Body of pancreas (tissue), 4 donors: ENCODE measurements at regions of chr14 and their contacts with region 1.

Region 1: GRCh38 chr14:77151918-77152588 is 10.5 kb upstream of the ZDHHC22 start:
- DNase-seq: no peak
- ATAC-seq: no peak
- H3K4me3 ChIP-seq: no peak overlapping the region
- H3K27ac ChIP-seq: no peak overlapping the region
- H3K4me1 ChIP-seq: no peaks in the 10 kb centered on the region
- H3K27me3 ChIP-seq: peaks cover 0 to 1% of the 10 kb centered on the region in 2 donors
- CTCF ChIP-seq: peak in 5 of 7 experiments; percentile 14 to 41 (median 24)
- POLR2A ChIP-seq: no peak

Region 2: DNA sequence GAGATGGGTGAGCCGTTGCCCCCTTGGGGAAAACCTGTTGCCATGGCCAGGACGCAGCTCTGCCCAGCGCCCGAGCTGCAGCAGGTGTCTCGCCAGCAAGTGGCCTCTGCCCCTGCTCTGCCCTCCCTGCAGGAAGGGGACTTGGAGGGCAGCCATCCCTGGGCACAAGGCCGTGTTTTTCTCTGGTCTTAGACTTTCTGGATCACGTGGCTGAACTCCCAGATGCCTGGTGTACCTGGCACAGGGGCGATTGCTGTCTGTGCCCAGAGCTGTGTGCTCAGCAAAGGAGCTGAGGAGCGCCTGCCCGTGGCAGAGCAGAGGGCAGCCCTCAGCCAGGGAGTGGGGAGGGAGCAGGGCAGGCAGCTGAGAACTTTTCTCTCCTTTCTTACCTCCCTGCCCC is 67.5 kb after region 1 on chr14:
- intact Hi-C with region 1: loop called (anchors 5 kb)
- DNase-seq: peak; percentile 72 to 93 (median 86)
- ATAC-seq: peak; percentile 87
- H3K4me3 ChIP-seq: no peak overlapping the region
- H3K27ac ChIP-seq: no peak overlapping the region
- H3K4me1 ChIP-seq: peaks cover 11% of the 10 kb centered on the region
- H3K27me3 ChIP-seq: no peaks in the 10 kb centered on the region
- CTCF ChIP-seq: peak in 1 of 7 experiments; percentile 31
- POLR2A ChIP-seq: no peak

Region 3: GRCh38 chr14:77314043-77314442 is 162.0 kb after region 1 on chr14:
- intact Hi-C with region 1: loop called (anchors 5 kb)
- DNase-seq: no peak
- ATAC-seq: no peak
- H3K4me3 ChIP-seq: no peak overlapping the region
- H3K27ac ChIP-seq: no peak overlapping the region
- H3K4me1 ChIP-seq: peaks cover 33% of the 10 kb centered on the region
- H3K27me3 ChIP-seq: no peaks in the 10 kb centered on the region
- CTCF ChIP-seq: no peak
- POLR2A ChIP-seq: no peak

Region 4: GRCh38 chr14:77799863-77800730 is 648.0 kb after region 1 on chr14 and contains the start of gene ADCK1:
- intact Hi-C with region 1: no loop called
- DNase-seq: peak; percentile 90 to 94 (median 90)
- ATAC-seq: peak; percentile 95
- H3K4me3 ChIP-seq: peak within 1 kb of the TSS; percentile 47 to 97
- H3K27ac ChIP-seq: peak within 1 kb of the TSS; percentile 77 to 96 (median 89)
- H3K4me1 ChIP-seq: peaks cover 9% of the 10 kb centered on the region
- H3K27me3 ChIP-seq: no peaks in the 10 kb centered on the region
- CTCF ChIP-seq: peak in 6 of 7 experiments; percentile 13 to 56 (median 39)
- POLR2A ChIP-seq: peak; percentile 52 to 75 (median 74)
- total RNA-seq, gene ADCK1: 2.6 to 26.4 TPM